Heart right ventricle (tissue), 16 donors: ENCODE measurements at regions of chr1 and their contacts with region 1.

Region 1: DNA sequence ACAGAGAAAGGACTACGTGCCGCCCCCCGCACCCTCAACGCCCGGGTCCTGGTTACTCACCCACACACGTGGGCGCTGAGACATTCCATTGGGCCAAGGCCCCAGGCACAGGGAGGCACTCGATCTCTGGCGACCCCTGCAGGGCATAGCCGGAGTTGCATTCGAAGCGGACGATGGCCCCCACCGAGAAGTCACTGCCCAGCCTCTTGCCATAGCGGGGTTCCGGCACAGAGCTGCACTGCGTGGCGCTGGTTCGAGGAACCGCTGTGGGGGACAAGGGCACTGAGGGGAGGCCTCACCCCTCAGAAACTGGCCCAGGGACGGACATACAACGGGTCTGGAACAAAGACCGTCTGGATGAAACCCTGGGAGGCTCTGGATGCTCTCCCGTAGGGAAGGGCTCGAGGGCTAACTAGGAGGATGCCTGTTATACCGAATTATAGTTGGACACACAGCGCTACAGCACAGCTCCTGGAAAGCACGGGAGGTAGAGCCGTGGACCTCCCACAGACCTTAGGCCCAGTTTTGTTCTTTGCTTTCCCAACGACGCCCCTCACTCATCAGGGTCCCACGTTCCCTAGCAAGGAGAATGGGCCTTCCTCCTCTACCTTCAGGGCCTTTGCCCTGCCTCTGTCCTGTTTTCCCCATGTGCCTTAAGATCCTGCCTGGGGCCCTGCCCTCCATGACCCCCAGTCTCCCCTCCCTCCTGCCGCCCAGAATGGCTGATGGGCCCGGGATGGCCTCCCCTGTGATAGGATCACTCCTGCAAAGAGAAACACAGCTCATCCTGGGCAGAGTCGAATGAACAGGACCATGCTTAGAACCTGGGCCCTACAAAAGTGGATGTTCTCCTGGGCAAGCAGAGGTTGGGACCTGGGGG is 152.8 kb downstream of the ZSCAN20 start:
- DNase-seq: no peak
- ATAC-seq: peak in 1 of 8 donors; percentile 51
- H3K4me3 ChIP-seq: no peak overlapping the region
- H3K27ac ChIP-seq: no peak overlapping the region
- H3K4me1 ChIP-seq: peaks cover 0 to 9% (median 0%) of the 10 kb centered on the region in 9 donors
- H3K27me3 ChIP-seq: peaks cover 0 to 6% (median 0%) of the 10 kb centered on the region in 7 donors
- CTCF ChIP-seq: peak in 3 of 9 donors; percentile 18 to 30 (median 28)

Region 2: GRCh38 chr1:33494929-33495328 is 130.3 kb before region 1 on chr1:
- intact Hi-C with region 1: loop called in 1 of 10 experiments (anchors 10 kb)
- DNase-seq: no peak
- ATAC-seq: no peak
- H3K4me3 ChIP-seq: no peak overlapping the region
- H3K27ac ChIP-seq: no peak overlapping the region
- H3K4me1 ChIP-seq: no peaks in the 10 kb centered on the region
- H3K27me3 ChIP-seq: no peaks in the 10 kb centered on the region
- CTCF ChIP-seq: no peak

Region 3: DNA sequence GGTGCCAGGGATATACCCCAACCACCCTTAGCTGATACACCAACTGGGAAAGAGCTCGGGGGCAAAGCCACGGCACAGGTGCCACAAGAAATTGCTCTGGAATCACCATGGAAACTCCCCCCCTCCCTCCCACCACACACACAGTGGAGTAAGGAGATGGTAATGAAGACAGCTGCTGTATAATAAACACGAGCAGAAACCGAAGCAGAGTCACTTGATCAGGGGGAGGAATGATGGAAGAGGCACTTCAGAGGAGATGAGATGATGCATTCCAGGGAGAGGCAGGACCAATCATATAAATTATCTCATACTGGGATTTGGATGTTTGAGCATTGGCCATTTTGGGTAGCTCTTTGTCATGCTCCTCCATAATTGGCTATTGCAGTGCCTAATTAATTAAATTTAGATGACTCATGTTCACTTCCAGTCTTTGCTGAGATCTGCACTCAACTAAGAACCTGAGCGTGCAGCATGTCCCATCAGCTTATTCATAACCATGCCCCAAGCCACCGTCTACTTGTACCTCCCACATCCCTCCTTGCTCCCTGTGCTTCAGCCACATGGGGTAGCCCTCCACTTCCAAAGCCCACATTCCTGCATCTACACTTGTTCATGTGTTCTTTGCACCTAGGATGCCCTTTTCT is 36.7 kb after region 1 on chr1:
- intact Hi-C with region 1: no loop called
- DNase-seq: no peak
- ATAC-seq: no peak
- H3K4me3 ChIP-seq: no peak overlapping the region
- H3K27ac ChIP-seq: no peak overlapping the region
- H3K4me1 ChIP-seq: peaks cover 0 to 18% (median 4%) of the 10 kb centered on the region in 9 donors
- H3K27me3 ChIP-seq: no peaks in the 10 kb centered on the region
- CTCF ChIP-seq: no peak